Ovary (tissue), 10 donors: ENCODE measurements at regions of chr9 and their contacts with region 1.

Region 1: DNA sequence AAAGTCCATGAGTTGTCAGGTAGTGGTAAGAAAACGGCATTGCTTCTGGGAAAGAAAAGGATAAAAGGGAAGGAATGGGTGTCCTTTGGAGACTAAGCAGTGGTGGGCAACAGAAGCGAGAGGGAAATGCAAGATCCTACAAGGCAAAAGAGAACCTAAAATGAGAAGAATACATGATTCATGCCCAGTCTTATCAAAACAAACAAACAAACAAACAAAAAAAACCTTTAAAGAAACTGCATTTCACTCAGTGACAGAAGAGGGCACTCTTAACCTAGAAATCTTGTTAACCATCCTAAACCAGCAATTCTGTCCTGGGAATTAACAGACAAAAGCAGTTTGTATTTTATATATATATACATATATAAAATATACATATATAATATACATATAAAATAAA is 88.5 kb downstream of the SUSD1 start:
- DNase-seq: no peak
- H3K4me3 ChIP-seq: no peak overlapping the region
- H3K27ac ChIP-seq: no peak overlapping the region
- H3K4me1 ChIP-seq: no peaks in the 10 kb centered on the region
- H3K27me3 ChIP-seq: no peaks in the 10 kb centered on the region
- CTCF ChIP-seq: peak in 2 of 3 donors; percentile 10 to 28
- EP300 ChIP-seq: no peak
- POLR2A ChIP-seq: no peak

Region 2: GRCh38 chr9:111983484-111983908 is 103.1 kb before region 1 on chr9:
- intact Hi-C with region 1: no loop called
- DNase-seq: no peak
- H3K4me3 ChIP-seq: no peak overlapping the region
- H3K27ac ChIP-seq: no peak overlapping the region
- H3K4me1 ChIP-seq: no peaks in the 10 kb centered on the region
- H3K27me3 ChIP-seq: no peaks in the 10 kb centered on the region
- CTCF ChIP-seq: no peak
- EP300 ChIP-seq: no peak
- POLR2A ChIP-seq: no peak

Region 3: GRCh38 chr9:112711050-112711689 is 624.5 kb after region 1 on chr9:
- intact Hi-C with region 1: loop called in 2 of 4 experiments (anchors 5 to 10 kb)
- DNase-seq: peak in 1 of 5 donors; percentile 25
- H3K4me3 ChIP-seq: no peak overlapping the region
- H3K27ac ChIP-seq: no peak overlapping the region
- H3K4me1 ChIP-seq: no peaks in the 10 kb centered on the region
- H3K27me3 ChIP-seq: no peaks in the 10 kb centered on the region
- CTCF ChIP-seq: peak in 2 of 3 donors; percentile 36 to 40
- EP300 ChIP-seq: no peak
- POLR2A ChIP-seq: no peak